PC-3 (cell line): ENCODE measurements at regions of chr16 and their contacts with region 1.

Region 1: DNA sequence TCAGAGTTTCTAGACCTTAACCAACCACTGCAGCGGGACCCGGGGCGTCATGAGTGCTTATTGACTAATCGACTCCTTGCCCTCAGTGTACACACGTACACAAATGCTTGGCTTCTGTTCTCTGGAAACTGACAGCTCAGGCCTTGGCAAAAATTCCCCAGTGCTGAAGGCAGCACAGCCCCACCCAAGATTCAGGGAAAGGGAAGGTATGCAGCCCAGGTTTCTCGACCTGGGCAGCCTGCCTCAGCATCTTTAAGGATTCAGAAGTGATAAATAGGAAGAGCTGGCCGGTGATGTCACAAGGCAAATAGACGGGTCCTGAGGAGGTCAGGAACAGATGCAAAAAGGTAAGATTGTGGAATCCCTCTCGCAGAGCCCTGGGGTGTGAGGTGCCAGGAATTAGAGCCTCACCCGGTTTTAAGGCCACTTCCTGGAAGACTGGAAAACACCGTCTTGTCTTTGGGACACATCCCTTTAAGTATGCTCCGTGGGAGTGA is 9.0 kb upstream of the CDH3 start:
- DNase-seq: peak; percentile 93
- ATAC-seq: peak; percentile 80
- H3K4me3 ChIP-seq: peak overlapping the region; percentile 13; the same call in 1 of the 2 replicates
- H3K27ac ChIP-seq: peak overlapping the region; percentile 87
- H3K4me1 ChIP-seq: peaks cover 25% of the 10 kb centered on the region
- H3K27me3 ChIP-seq: no peaks in the 10 kb centered on the region
- CTCF ChIP-seq: no peak

Region 2: GRCh38 chr16:68658258-68659008 is 22.3 kb after region 1 on chr16:
- CTCF ChIA-PET with region 1: no interaction called
- POLR2A ChIA-PET with region 1: interaction called, 14 read pairs
- intact Hi-C with region 1: loop called (anchors 2 kb)
- DNase-seq: peak; percentile 98
- ATAC-seq: peak; percentile 91
- H3K4me3 ChIP-seq: peak overlapping the region; percentile 42; the same call in 1 of the 2 replicates
- H3K27ac ChIP-seq: peak overlapping the region; percentile 99
- H3K4me1 ChIP-seq: peaks cover 45% of the 10 kb centered on the region
- H3K27me3 ChIP-seq: no peaks in the 10 kb centered on the region
- CTCF ChIP-seq: no peak

Region 3: DNA sequence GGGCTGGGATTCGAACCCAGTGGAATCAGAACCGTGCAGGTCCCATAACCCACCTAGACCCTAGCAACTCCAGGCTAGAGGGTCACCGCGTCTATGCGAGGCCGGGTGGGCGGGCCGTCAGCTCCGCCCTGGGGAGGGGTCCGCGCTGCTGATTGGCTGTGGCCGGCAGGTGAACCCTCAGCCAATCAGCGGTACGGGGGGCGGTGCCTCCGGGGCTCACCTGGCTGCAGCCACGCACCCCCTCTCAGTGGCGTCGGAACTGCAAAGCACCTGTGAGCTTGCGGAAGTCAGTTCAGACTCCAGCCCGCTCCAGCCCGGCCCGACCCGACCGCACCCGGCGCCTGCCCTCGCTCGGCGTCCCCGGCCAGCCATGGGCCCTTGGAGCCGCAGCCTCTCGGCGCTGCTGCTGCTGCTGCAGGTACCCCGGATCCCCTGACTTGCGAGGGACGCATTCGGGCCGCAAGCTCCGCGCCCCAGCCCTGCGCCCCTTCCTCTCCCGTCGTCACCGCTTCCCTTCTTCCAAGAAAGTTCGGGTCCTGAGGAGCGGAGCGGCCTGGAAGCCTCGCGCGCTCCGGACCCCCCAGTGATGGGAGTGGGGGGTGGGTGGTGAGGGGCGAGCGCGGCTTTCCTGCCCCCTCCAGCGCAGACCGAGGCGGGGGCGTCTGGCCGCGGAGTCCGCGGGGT is 101.1 kb after region 1 on chr16 and contains the start of gene CDH1:
- CTCF ChIA-PET with region 1: no interaction called
- POLR2A ChIA-PET with region 1: interaction called, 16 read pairs
- intact Hi-C with region 1: no loop called
- DNase-seq: peak; percentile 86
- ATAC-seq: peak; percentile 52
- H3K4me3 ChIP-seq: peak within 1 kb of the TSS; percentile 90
- H3K27ac ChIP-seq: peak within 1 kb of the TSS; percentile 57
- H3K4me1 ChIP-seq: peaks cover 30% of the 10 kb centered on the region
- H3K27me3 ChIP-seq: no peaks in the 10 kb centered on the region
- CTCF ChIP-seq: no peak
- total RNA-seq, gene CDH1: 100 and 124 TPM in 2 replicates